Psoas muscle (tissue), 8 donors: ENCODE measurements at regions of chr21 and their contacts with region 1.

Region 1: GRCh38 chr21:42524349-42525151 is 10.9 kb downstream of the SLC37A1 start:
- DNase-seq: peak; percentile 67 to 86
- ATAC-seq: peak; percentile 68 to 82 (median 74)
- H3K4me3 ChIP-seq: peak overlapping the region; percentile 47
- H3K27ac ChIP-seq: peak overlapping the region; percentile 88
- H3K4me1 ChIP-seq: peaks cover 43% of the 10 kb centered on the region
- H3K27me3 ChIP-seq: no peaks in the 10 kb centered on the region
- CTCF ChIP-seq: no peak

Region 2: GRCh38 chr21:42233067-42233961 is 291.2 kb before region 1 on chr21:
- intact Hi-C with region 1: loop called in 1 of 2 experiments (anchors 10 kb)
- DNase-seq: peak; percentile 89 to 93
- ATAC-seq: peak; percentile 75 to 88 (median 85)
- H3K4me3 ChIP-seq: peak overlapping the region; percentile 70
- H3K27ac ChIP-seq: peak overlapping the region; percentile 96
- H3K4me1 ChIP-seq: peaks cover 88% of the 10 kb centered on the region
- H3K27me3 ChIP-seq: no peaks in the 10 kb centered on the region
- CTCF ChIP-seq: peak; percentile 47

Region 3: GRCh38 chr21:42513985-42514882 is 10.3 kb before region 1 on chr21:
- intact Hi-C with region 1: no loop called
- DNase-seq: peak; percentile 46 to 70
- ATAC-seq: peak; percentile 68 to 86 (median 80)
- H3K4me3 ChIP-seq: peak overlapping the region; percentile 95
- H3K27ac ChIP-seq: peak overlapping the region; percentile 88
- H3K4me1 ChIP-seq: peaks cover 12% of the 10 kb centered on the region
- H3K27me3 ChIP-seq: no peaks in the 10 kb centered on the region
- CTCF ChIP-seq: no peak